ENCODE measurements at regions of chr3 and their contacts with region 1.

Region 1: DNA sequence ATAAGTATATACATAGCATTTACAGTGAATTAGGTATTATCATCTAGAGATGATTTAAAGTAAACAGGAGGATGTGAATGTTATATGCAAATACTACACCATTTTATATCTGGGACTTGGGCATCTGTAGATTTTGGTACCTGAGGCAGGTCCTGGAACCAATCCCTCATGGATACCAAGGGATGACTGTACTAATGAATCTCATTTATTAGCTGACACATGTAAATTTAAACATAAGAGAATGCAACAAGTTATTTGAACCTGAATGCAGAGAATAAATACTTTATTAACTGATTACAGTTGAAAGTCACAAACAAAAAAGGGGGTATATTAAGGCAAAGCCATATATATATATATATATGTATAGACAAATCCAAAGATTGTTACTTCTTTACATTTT is 23.1 kb upstream of the CMTM6 start:
- DNase-seq: no peak
- H3K4me3 ChIP-seq: no peak overlapping the region
- H3K27ac ChIP-seq: no peak overlapping the region
- H3K4me1 ChIP-seq: no peaks in the 10 kb centered on the region
- H3K27me3 ChIP-seq: no peaks in the 10 kb centered on the region
- CTCF ChIP-seq: no peak
- EP300 ChIP-seq: no peak
- POLR2A ChIP-seq: no peak

Region 2: GRCh38 chr3:32391643-32392535 is 133.8 kb before region 1 on chr3 and contains the start of gene CMTM7:
- intact Hi-C with region 1: no loop called
- DNase-seq: peak; percentile 82
- H3K4me3 ChIP-seq: peak within 1 kb of the TSS; percentile 48 to 71 (median 68)
- H3K27ac ChIP-seq: peak within 1 kb of the TSS; percentile 63 to 82 (median 69)
- H3K4me1 ChIP-seq: peaks cover 0 to 12% (median 9%) of the 10 kb centered on the region in 4 donors
- H3K27me3 ChIP-seq: no peaks in the 10 kb centered on the region
- CTCF ChIP-seq: no peak
- EP300 ChIP-seq: no peak
- POLR2A ChIP-seq: no peak
- total RNA-seq, gene CMTM7: 7.1 to 9.9 (median 8.2) TPM

Region 3: GRCh38 chr3:32564196-32564595 is 38.5 kb after region 1 on chr3:
- intact Hi-C with region 1: loop called (anchors 5 kb)
- DNase-seq: no peak
- H3K4me3 ChIP-seq: no peak overlapping the region
- H3K27ac ChIP-seq: no peak overlapping the region
- H3K4me1 ChIP-seq: peaks cover 0 to 15% (median 10%) of the 10 kb centered on the region in 4 donors
- H3K27me3 ChIP-seq: no peaks in the 10 kb centered on the region
- CTCF ChIP-seq: no peak
- EP300 ChIP-seq: no peak
- POLR2A ChIP-seq: no peak

Measured in sigmoid colon (tissue), 7 donors.